ENCODE measurements at regions of chr2 and their contacts with region 1.

Region 1: DNA sequence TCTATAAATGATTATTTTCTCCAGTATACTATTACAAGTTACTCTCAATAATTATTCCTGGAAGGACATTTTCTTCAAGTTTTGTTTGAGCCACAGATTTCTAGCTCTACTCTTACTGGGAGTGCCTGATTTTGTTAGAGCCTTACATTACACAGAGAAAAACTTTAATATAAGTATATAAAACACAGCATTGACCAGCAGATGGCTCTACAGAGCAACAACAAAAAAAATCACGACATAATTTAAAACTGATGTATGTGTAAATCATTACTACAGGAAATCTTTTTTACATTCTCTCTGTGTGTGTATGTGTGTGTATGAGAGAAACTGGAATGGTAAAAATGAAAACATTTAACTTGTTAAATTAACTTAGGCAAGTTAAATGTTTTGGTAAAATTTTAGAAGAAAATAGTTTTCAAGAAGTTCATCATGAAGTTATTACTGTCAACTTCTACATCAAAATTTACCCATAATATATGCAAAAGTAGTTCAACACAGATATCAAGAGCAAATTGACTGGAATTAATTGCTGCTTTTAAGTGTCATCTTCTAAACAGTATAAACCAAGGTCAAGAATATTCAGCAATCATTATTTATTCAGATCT is 103.3 kb downstream of the MDH1 start:
- DNase-seq: no peak
- H3K4me3 ChIP-seq: no peak overlapping the region
- H3K27ac ChIP-seq: no peak overlapping the region
- H3K4me1 ChIP-seq: peaks cover 0 to 3% (median 0%) of the 10 kb centered on the region in 4 experiments; a peak in 2 of 7 replicates
- H3K27me3 ChIP-seq: no peaks in the 10 kb centered on the region
- CTCF ChIP-seq: peak in 2 of 3 experiments; percentile 18 to 31; a peak in 2 of 4 replicates
- EP300 ChIP-seq: no peak
- POLR2A ChIP-seq: no peak
- RAD21 ChIP-seq: peak; percentile 46 to 61

Region 2: GRCh38 chr2:63679252-63679855 is 12.8 kb before region 1 on chr2:
- CTCF ChIA-PET with region 1: interaction called, 34 read pairs
- POLR2A ChIA-PET with region 1: no interaction called
- DNase-seq: no peak
- H3K4me3 ChIP-seq: no peak overlapping the region
- H3K27ac ChIP-seq: no peak overlapping the region
- H3K4me1 ChIP-seq: peaks cover 0 to 6% (median 2%) of the 10 kb centered on the region in 4 experiments; a peak in 3 of 7 replicates
- H3K27me3 ChIP-seq: peaks cover 0 to 1% (median 0%) of the 10 kb centered on the region in 4 experiments; a peak in 1 of 7 replicates
- CTCF ChIP-seq: no peak
- EP300 ChIP-seq: no peak
- POLR2A ChIP-seq: no peak
- RAD21 ChIP-seq: no peak

Measured in H1 (cell line).